ENCODE measurements at regions of chr11 and their contacts with region 1.

Region 1: DNA sequence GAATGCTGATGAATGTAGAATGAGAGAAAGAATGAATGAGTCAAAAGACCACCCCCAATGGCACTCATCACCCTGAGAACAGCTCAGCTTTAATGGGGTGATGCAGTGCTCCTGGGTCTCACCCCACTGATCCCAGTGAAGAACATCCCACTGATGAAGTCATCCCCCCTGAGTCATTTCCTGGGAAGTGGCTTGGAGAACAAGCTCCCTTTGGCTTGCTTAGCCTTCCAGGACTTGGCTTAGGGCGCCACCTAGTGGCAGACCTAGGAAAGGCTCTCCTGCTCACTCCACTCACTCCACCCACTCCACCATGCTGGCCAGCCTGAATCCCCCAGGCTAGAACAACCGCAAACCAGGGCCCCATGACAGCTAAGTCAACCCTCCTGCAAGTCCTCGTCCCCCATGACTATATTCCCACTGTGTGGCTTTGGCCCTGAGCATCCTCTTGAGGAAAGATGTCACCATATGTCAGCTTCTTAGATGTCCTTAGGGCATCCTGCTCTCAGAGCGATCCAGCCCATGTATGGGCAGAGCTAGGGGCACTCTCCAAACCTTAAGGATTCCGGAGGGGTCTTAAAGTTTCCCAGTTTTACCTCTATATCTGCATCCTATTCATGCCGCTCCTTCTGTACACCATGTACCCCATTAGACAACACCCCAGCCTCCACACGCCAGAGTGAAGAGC is 17.8 kb upstream of the TMPRSS13 start:
- DNase-seq: peak; percentile 81 to 99
- H3K4me3 ChIP-seq: no peak overlapping the region
- H3K27ac ChIP-seq: no peak overlapping the region
- H3K4me1 ChIP-seq: 0 out of 7 replicates have a peak, but pooled peaks cover 0 to 2% (median 0%) of the 10 kb centered on the region in 4 experiments
- H3K27me3 ChIP-seq: no peaks in the 10 kb centered on the region
- CTCF ChIP-seq: peak; percentile 87 to 98 (median 98)
- EP300 ChIP-seq: 0 out of 3 replicates have a peak, but pooled peaks of 1 of the 2 experiments have one; percentile 9
- POLR2A ChIP-seq: no peak
- RAD21 ChIP-seq: peak; percentile 98 to 99

Region 2: GRCh38 chr11:117817368-117818040 is 129.5 kb before region 1 on chr11:
- CTCF ChIA-PET with region 1: interaction called, 140 read pairs
- POLR2A ChIA-PET with region 1: interaction called, 3 read pairs
- DNase-seq: peak; percentile 70 to 97
- H3K4me3 ChIP-seq: peak overlapping the region in 3 of 4 experiments; percentile 10 to 46 (median 29); a peak in 4 of 8 replicates
- H3K27ac ChIP-seq: no peak overlapping the region
- H3K4me1 ChIP-seq: peaks cover 0 to 31% (median 20%) of the 10 kb centered on the region in 4 experiments; a peak in 6 of 7 replicates
- H3K27me3 ChIP-seq: no peaks in the 10 kb centered on the region; a peak in 1 of 7 replicates
- CTCF ChIP-seq: peak in 2 of 3 experiments; percentile 87 to 96; a peak in 3 of 4 replicates
- EP300 ChIP-seq: no peak
- POLR2A ChIP-seq: no peak
- RAD21 ChIP-seq: peak; percentile 85 to 88

Region 3: DNA sequence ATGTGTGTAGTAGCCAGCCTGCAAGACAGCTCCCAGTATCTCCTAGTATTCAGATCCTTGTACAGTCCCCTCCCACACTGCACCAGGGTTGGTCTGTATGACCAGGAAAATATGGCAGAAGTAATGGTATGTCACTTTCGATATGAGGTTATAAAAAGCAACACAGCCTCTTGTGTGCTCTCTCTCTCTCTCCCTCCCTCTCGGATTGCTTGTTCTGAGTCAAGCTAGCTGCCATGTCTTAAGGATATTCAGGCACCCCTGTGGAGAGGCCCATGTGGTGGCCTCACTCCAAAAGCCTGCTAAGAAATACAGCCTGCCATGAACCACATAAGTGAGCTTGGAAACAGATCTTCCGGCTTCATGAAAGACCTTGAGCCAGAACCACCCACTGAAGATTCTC is 95.9 kb before region 1 on chr11:
- CTCF ChIA-PET with region 1: interaction called, 142 read pairs
- POLR2A ChIA-PET with region 1: no interaction called
- DNase-seq: no peak
- H3K4me3 ChIP-seq: no peak overlapping the region
- H3K27ac ChIP-seq: no peak overlapping the region
- H3K4me1 ChIP-seq: peaks cover 0 to 7% (median 4%) of the 10 kb centered on the region in 4 experiments; a peak in 5 of 7 replicates
- H3K27me3 ChIP-seq: no peaks in the 10 kb centered on the region; a peak in 1 of 7 replicates
- CTCF ChIP-seq: no peak; a peak in 1 of 4 replicates
- EP300 ChIP-seq: no peak
- POLR2A ChIP-seq: no peak
- RAD21 ChIP-seq: no peak

Region 4: GRCh38 chr11:117900121-117900648 is 46.8 kb before region 1 on chr11:
- CTCF ChIA-PET with region 1: interaction called, 15 read pairs
- POLR2A ChIA-PET with region 1: no interaction called
- DNase-seq: no peak
- H3K4me3 ChIP-seq: no peak overlapping the region
- H3K27ac ChIP-seq: no peak overlapping the region
- H3K4me1 ChIP-seq: no peaks in the 10 kb centered on the region; a peak in 1 of 7 replicates
- H3K27me3 ChIP-seq: peaks cover 0 to 2% (median 0%) of the 10 kb centered on the region in 4 experiments; a peak in 1 of 7 replicates
- CTCF ChIP-seq: no peak
- EP300 ChIP-seq: no peak
- POLR2A ChIP-seq: no peak
- RAD21 ChIP-seq: no peak

Region 5: GRCh38 chr11:117932067-117932370 is 15.0 kb before region 1 on chr11:
- CTCF ChIA-PET with region 1: interaction called, 173 read pairs
- POLR2A ChIA-PET with region 1: interaction called, 4 read pairs
- DNase-seq: no peak
- H3K4me3 ChIP-seq: no peak overlapping the region
- H3K27ac ChIP-seq: no peak overlapping the region
- H3K4me1 ChIP-seq: peaks cover 0 to 10% (median 5%) of the 10 kb centered on the region in 4 experiments; a peak in 6 of 7 replicates
- H3K27me3 ChIP-seq: no peaks in the 10 kb centered on the region; a peak in 1 of 7 replicates
- CTCF ChIP-seq: no peak
- EP300 ChIP-seq: no peak
- POLR2A ChIP-seq: no peak
- RAD21 ChIP-seq: no peak

Region 6: DNA sequence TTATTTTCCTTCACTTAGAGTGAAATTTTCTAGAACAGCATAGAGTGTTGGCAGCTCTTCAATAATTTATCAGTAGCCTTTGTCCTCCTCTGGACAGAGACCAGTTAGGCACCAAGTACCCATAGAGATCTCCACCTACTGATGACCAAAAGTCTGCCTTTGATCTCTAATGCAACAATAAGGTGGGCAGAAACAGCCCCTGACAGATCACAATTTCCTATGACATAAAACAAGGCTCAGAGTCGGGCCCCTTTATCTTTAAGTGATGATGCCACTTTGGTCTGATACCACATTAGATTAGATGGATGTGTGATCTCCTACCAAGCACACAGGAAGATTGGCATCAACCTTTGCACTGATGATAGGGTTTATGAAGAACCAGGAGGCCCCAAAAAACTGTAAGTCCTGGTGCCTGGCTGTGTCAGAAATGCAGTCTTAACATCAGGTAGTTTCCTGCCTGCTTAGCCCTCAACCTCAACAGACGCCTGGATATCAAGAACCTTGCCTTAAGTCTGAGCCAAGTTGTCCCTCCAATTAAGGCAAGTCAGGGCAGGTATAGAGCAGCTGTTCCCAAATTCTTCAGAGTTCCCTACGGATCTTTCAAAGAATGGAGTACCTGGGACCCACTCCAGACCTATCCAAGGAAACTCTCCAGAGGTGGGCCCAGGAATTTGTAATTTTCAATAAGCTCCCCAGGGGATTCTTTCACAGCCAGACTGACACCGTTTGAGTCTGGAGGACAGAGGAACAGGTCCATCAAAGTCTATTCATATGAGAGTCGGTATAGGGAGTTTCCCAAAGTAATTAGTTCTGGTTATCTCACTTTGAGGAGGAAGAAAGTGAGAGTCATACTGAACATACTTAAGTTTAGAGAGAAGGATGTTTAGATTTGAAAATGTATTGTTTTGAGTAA is 99.3 kb after region 1 on chr11:
- CTCF ChIA-PET with region 1: interaction called, 134 read pairs
- POLR2A ChIA-PET with region 1: no interaction called
- DNase-seq: no peak
- H3K4me3 ChIP-seq: no peak overlapping the region
- H3K27ac ChIP-seq: no peak overlapping the region
- H3K4me1 ChIP-seq: no peaks in the 10 kb centered on the region
- H3K27me3 ChIP-seq: no peaks in the 10 kb centered on the region
- CTCF ChIP-seq: no peak
- EP300 ChIP-seq: no peak
- POLR2A ChIP-seq: no peak
- RAD21 ChIP-seq: no peak

Region 7: GRCh38 chr11:118142809-118143208 is 195.8 kb after region 1 on chr11:
- CTCF ChIA-PET with region 1: no interaction called
- POLR2A ChIA-PET with region 1: no interaction called
- DNase-seq: no peak
- H3K4me3 ChIP-seq: peak overlapping the region in 1 of 4 experiments; percentile 15; a peak in 1 of 8 replicates
- H3K27ac ChIP-seq: no peak overlapping the region
- H3K4me1 ChIP-seq: peaks cover 0 to 7% (median 2%) of the 10 kb centered on the region in 4 experiments; a peak in 2 of 7 replicates
- H3K27me3 ChIP-seq: peaks cover 0 to 25% (median 11%) of the 10 kb centered on the region in 4 experiments; a peak in 6 of 7 replicates
- CTCF ChIP-seq: no peak
- EP300 ChIP-seq: no peak
- POLR2A ChIP-seq: no peak
- RAD21 ChIP-seq: no peak

Region 8: DNA sequence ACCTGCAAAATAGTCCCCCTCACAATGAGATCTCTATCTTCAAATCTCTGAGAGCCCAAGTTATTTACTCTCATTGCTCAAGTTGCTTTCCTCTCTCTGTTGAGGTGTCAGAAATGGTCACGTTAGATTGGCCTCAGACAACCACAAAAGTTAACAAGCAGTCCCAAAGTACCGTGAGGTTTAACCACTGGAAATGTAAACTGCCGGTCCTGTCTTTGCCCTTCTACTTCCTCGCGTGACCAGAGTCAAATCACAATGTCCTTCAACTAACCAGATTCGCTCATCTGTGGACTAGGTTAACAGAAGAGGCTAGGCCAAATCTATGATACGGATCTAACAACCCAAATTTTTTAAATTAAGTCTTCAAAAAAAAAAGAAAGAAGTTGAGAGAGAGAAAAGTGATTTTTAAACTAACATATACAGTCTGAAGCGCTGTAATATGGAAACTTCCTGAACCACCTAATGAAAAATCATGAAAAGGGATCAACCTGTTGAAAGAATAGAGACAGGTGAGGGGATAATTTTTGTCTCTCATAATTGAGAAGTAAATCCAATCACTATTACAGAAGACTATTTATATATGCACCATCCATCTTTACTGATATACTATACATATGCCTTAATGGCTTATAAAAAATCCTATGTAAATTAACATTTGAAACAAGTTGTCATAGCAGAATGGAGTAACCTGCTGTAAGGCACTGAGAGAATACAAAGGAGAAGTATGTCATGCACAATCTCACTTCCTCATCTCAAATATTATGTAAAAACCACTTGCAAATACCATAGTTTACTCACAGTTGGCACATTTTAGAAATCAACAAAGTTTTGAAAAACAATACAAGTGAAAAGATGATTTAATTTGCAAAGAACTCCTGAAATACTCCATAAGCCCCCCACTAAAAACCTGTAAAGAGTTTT is 281.1 kb after region 1 on chr11:
- CTCF ChIA-PET with region 1: no interaction called
- POLR2A ChIA-PET with region 1: no interaction called
- DNase-seq: no peak
- H3K4me3 ChIP-seq: no peak overlapping the region
- H3K27ac ChIP-seq: no peak overlapping the region
- H3K4me1 ChIP-seq: no peaks in the 10 kb centered on the region
- H3K27me3 ChIP-seq: no peaks in the 10 kb centered on the region; a peak in 1 of 7 replicates
- CTCF ChIP-seq: no peak
- EP300 ChIP-seq: no peak
- POLR2A ChIP-seq: no peak
- RAD21 ChIP-seq: no peak

Region 9: DNA sequence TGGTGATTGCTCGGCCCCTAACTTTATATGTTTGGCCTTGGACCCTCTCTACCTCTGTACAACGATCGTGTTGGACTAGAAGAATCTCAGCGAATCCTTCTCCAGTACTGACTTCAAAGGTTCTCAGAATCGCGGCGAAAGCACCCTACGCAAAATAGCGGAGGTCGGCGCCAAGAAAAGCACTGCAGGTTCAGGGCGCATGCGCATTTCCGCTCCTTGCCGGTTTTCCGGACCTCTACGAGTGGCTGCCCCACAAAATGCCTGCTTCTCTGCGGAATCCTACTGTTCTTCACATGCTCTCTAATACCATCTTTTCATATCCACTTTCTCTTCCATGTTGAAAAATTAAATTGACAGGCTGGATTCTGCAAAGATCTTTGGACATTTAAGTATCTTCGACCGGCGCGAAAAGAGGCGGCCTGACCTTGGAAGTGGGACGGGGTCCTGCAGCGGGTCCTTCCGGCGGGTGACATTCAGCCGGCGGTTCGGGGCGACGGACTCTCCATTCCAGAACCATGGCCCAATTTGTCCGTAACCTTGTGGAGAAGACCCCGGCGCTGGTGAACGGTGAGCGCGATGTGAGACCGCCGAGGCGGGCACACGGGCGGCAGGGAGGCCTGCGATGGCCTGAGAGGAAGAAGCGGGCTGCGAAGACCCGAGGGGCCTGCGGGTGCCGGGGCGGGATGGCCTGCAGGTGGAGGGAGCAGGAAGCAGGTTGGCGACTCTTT is 454.3 kb after region 1 on chr11 and contains the start of gene ATP5MG:
- CTCF ChIA-PET with region 1: no interaction called
- POLR2A ChIA-PET with region 1: no interaction called
- DNase-seq: peak; percentile 72 to 90
- H3K4me3 ChIP-seq: peak within 1 kb of the TSS; percentile 81 to 95 (median 92)
- H3K27ac ChIP-seq: peak within 1 kb of the TSS; percentile 88
- H3K4me1 ChIP-seq: peaks cover 0 to 6% (median 0%) of the 10 kb centered on the region in 4 experiments; a peak in 2 of 7 replicates
- H3K27me3 ChIP-seq: no peaks in the 10 kb centered on the region
- CTCF ChIP-seq: no peak
- EP300 ChIP-seq: no peak
- POLR2A ChIP-seq: peak; percentile 67 to 78; a peak in 2 of 3 replicates
- RAD21 ChIP-seq: no peak
- total RNA-seq, gene ATP5MG: 237 and 251 TPM in 2 replicates